ENCODE measurements at regions of chr17 and their contacts with region 1.

Region 1: GRCh38 chr17:28763804-28764266 is 20.0 kb downstream of the TRAF4 start:
- DNase-seq: no peak
- H3K4me3 ChIP-seq: no peak overlapping the region
- H3K27me3 ChIP-seq: no peaks in the 10 kb centered on the region
- CTCF ChIP-seq: peak; percentile 77

Region 2: DNA sequence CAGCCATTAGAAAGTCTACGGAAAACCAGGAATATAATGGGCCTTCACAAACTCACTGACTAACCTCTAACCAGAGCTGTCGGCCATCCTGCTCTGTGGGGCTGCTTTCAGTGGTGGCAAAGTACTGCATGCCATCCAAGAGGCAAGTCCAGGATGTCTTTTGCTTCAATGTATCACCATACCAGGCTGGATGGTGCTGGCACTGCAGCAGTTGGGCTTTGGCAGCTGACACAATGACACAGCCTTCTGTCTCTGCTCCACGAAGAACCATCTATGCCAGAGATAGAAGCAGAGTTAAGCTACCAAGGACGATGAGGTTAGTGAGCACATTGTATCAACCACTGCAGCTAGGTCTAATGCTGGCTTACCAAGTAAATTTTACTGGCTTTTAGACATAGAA is 140.1 kb before region 1 on chr17:
- CTCF ChIA-PET with region 1: no interaction called
- POLR2A ChIA-PET with region 1: no interaction called
- DNase-seq: no peak
- H3K4me3 ChIP-seq: no peak overlapping the region
- H3K27me3 ChIP-seq: no peaks in the 10 kb centered on the region
- CTCF ChIP-seq: no peak

Region 3: DNA sequence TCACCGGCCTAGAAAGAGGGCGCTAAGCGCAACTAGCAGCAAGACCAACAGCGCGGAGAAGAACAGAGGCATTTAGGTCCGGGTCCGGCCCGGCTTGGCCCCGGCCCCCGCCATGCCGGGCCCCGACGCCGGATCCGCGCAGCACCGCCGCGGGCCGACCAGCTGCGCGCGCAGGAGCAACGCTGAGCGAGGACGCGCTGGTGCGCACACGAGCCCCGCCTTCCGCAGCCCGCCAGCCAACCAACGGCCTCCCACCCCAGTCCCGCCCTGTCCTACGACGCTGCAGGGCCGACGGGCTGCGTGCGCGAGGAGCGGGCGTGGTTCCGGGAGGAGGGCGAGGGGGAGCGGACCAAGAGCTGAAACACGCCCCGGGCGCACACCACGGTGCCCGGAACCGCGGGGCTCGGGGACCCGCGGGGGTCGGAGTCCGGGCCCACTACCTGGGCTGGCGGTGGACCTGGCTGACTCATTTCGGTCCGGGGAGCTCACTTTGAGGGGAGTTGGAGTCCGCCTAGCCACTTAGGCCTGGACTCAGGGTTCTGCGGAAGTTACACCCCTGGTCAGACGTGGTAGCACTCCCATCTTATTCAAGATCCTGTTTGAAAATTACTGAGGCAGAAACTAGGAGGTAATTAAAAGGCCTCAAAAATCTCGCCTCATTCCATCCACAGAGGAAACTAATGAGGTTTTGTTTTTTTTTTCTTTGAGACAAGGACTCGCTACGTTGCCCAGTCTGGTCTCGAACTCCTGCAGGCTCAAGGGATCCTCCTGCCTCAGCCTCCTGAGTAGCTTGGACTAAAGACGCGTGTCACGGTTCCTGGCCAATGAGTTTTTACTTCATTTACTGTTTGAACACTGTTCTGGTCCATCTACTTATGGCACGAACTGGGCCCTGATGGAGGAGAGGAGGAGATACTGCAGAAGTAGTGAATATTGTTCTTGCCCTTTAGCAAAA is 118.6 kb before region 1 on chr17 and contains the start of gene BLTP2:
- CTCF ChIA-PET with region 1: no interaction called
- POLR2A ChIA-PET with region 1: no interaction called
- DNase-seq: peak; percentile 65
- H3K4me3 ChIP-seq: peak within 1 kb of the TSS; percentile 90
- H3K27me3 ChIP-seq: no peaks in the 10 kb centered on the region
- CTCF ChIP-seq: no peak
- polyA plus RNA-seq, gene BLTP2: 142 and 206 TPM in 2 replicates

Region 4: DNA sequence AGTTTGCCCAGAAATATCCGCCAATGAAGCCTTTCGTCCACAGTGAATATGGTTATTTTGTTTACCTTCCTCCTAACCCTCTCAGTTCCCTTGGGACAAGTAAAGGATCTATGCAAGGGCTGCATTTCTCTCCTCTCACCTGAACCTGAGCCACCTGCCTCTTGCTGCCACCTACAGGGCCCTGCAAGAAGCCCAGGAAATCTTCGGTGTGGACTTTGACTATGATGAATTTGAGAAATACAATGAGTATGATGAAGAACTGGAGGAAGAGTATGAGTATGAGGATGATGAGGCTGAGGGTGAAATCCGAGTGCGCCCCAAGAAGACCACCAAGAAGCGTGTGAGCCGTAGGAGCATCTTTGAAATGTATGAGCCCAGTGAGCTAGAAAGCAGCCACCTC is 87.9 kb before region 1 on chr17:
- CTCF ChIA-PET with region 1: no interaction called
- POLR2A ChIA-PET with region 1: no interaction called
- DNase-seq: no peak
- H3K4me3 ChIP-seq: no peak overlapping the region
- H3K27me3 ChIP-seq: no peaks in the 10 kb centered on the region
- CTCF ChIP-seq: peak; percentile 17; the same call in 1 of the 2 replicates

Region 5: DNA sequence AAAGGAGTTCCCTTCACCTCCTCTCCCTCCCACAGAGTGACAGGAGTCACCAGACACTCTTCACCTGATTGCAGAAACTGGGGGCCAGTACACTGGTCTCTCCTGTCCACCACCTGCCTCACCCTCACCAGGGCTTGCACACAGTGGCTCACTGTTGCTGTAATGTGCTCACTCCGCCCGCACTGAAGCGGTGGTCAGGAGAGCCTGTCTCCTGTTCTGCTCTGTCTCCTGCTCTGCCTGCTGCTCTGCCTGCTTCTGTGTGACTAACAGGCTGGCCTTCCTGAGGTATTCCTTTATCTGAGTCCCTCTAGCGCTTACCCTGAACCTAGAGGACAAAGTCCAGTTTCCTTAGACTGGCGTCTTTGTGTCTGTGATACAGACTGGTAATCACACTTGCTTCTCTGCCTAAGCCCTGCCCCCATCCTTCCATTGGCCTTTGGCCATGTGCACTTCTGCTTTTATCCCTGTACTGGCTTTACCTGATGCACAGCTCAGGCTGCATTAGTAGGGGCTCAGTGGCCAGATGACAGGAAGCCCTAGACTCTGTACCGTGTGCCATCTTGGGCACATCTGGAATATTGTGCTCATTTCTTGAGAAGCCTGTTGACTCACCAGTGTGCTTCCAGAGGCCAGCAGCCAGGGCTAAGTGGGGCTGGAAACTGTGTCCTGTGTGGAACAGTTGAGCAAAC is 65.4 kb before region 1 on chr17:
- CTCF ChIA-PET with region 1: no interaction called
- POLR2A ChIA-PET with region 1: no interaction called
- DNase-seq: no peak
- H3K4me3 ChIP-seq: no peak overlapping the region
- H3K27me3 ChIP-seq: no peaks in the 10 kb centered on the region
- CTCF ChIP-seq: no peak

Region 6: GRCh38 chr17:28750178-28751047 is 13.4 kb before region 1 on chr17:
- CTCF ChIA-PET with region 1: interaction called, 95 read pairs
- POLR2A ChIA-PET with region 1: no interaction called
- DNase-seq: no peak
- H3K4me3 ChIP-seq: no peak overlapping the region
- H3K27me3 ChIP-seq: no peaks in the 10 kb centered on the region
- CTCF ChIP-seq: peak; percentile 100

Region 7: DNA sequence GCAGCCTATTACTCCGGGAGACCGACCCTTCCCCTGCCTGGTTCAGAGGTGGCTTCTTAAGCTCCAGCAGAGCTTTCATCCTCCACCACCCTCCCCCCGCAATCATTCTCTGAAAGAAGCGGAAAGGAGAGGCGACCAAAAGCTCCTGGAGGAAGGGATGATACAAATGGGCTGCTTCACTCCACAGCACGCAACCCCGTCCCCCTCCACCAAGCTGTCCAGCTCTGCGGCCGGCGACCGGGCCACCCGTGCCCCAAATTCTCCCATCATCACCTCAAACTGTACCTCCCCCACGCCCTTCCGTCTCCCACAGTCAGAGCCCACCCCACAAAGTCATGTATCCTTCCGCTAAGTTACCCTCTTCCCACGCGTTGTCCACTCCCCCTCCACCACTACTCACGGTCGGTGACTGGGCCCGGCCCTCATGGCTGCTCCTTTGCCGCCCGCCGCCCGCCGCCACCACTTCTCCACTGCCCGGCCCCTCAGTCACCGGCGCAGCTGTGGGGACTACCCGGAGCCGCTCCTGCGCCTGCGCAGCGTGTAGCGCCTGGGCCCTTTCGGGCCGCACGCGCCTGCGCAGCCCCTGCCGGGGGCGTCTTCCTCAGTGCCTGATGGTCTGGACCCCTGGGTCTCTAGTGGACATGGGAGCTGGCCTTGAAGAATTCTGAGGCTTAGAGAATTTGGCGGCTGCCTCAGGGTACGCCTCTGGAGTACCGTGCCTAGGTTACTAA is 78.6 kb after region 1 on chr17 and contains the start of gene FAM222B:
- CTCF ChIA-PET with region 1: interaction called, 13 read pairs
- POLR2A ChIA-PET with region 1: no interaction called
- DNase-seq: no peak
- H3K4me3 ChIP-seq: peak within 1 kb of the TSS; percentile 93
- H3K27me3 ChIP-seq: no peaks in the 10 kb centered on the region
- CTCF ChIP-seq: no peak
- polyA plus RNA-seq, gene FAM222B: 4.4 and 5.2 TPM in 2 replicates

Region 8: DNA sequence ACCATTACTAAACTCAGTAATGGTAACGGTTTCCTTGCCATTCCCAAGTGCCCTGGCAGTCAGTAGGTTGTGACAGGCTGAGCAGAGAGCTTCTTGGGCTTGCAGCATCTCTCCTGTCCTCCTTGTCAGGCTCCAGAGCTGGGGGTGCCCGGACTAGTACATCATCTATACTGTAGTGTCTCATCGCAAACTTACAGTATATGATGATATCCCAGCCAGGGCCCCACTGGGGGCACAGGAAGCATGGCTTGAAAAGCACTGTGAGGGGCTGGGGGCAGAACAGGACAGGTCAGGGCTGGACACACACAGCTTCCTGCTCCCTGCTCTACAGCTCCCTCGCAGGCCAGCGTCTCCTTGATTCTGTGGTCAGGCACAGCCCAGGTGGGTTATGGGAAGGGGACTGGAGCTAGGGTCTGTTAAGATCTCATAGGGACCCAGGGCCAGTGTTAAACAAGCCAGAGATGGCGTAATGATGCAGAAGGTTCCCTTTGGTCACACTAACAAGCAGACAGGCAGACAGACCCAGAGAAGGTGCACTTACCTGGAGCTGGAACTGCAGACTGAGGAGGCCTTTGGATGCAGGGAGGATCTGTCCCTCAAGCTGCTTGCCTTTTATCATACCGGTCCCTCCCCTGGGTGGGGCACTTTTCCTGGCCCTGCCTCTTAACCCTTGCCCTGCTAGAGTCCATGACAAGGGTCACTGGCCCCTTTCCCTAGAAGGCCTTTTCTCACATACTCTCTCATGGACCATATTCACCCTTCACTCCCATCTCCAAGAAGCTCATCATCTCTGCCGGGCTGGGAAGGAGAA is 97.8 kb after region 1 on chr17:
- CTCF ChIA-PET with region 1: interaction called, 13 read pairs
- POLR2A ChIA-PET with region 1: no interaction called
- DNase-seq: no peak
- H3K4me3 ChIP-seq: no peak overlapping the region
- H3K27me3 ChIP-seq: no peaks in the 10 kb centered on the region
- CTCF ChIP-seq: no peak

Region 9: DNA sequence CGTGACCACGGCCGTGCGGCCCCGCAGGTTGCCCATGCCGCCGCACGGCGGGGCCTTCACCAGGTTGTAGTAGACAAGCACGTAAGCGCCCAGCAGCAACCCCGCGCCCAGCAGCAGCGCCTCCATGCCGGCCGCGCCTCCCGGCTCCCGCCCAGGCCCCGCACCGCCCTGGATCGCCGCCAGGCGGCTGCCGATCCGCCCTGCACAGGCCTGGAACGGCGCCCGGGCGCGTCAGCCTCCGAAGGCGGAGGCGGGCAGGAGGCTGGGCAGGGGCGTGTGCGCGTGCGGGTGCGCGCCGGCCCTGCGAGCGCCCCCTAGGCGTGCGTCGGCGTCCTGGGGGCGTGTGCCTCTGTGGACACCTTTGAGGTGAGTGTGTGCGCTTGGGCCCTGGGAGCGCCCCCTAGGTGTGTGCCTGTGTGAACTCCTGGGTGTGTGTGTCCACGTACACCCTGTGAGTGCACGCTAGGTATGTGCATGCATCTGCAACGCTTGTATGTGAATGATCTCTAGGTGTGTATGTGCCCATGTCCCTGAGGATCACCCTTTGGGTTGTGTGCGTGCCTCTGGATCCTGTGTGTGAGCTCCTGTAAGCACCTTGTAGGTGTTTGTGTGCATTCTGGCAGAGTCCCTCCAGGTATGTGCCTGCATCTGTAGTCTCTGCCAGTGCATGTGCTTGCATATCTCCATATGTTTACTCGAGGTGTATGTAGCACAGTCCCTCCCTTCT is 139.1 kb after region 1 on chr17 and contains the start of gene DHRS13:
- CTCF ChIA-PET with region 1: interaction called, 22 read pairs
- POLR2A ChIA-PET with region 1: no interaction called
- DNase-seq: peak; percentile 19
- H3K4me3 ChIP-seq: peak within 1 kb of the TSS; percentile 57
- H3K27me3 ChIP-seq: no peaks in the 10 kb centered on the region
- CTCF ChIP-seq: peak; percentile 71
- polyA plus RNA-seq, gene DHRS13: 2.1 and 2.8 TPM in 2 replicates

Region 10: GRCh38 chr17:28916302-28916934 is 152.6 kb after region 1 on chr17:
- CTCF ChIA-PET with region 1: interaction called, 43 read pairs
- POLR2A ChIA-PET with region 1: no interaction called
- DNase-seq: no peak
- H3K4me3 ChIP-seq: no peak overlapping the region
- H3K27me3 ChIP-seq: no peaks in the 10 kb centered on the region
- CTCF ChIP-seq: peak; percentile 64